Activated naive CD8-positive, alpha-beta T cell treated with anti-CD3 and anti-CD28 coated beads, Interleukin-2, amount 10 ng/mL, durations not matched to agents 7 days and 5 days (primary cell): ENCODE measurements at regions of chr1 and their contacts with region 1.

Region 1: DNA sequence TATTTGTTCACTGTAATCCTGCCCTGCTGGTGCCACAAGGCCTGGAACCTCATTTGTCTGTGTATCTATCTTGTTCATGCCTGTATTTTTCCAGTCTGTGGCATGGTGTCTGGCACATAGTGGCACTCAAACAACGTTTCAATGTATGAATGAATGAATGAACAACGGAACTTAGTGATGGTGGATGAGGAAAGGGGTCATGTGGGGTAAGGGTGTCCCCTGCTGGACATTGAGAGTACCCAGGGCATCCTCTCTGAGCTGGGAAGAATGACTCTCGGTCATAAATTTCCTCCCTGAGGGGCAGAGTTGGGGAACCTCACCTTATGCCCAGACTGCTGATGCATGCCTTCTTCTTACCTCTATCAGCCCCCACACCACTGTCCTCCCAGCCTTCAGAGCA is 18.9 kb upstream of the ZNF683 start:
- DNase-seq: no peak
- ATAC-seq: peak; percentile 66
- H3K4me3 Mint-ChIP-seq: peak overlapping the region; percentile 60
- H3K27ac Mint-ChIP-seq: peak overlapping the region; percentile 82
- H3K4me1 Mint-ChIP-seq: peaks cover 55% of the 10 kb centered on the region
- H3K27me3 Mint-ChIP-seq: peaks cover 4% of the 10 kb centered on the region

Region 2: GRCh38 chr1:26321315-26322041 is 70.0 kb before region 1 on chr1:
- POLR2A ChIA-PET with region 1: interaction called, 11 read pairs
- DNase-seq: peak; percentile 95
- ATAC-seq: peak; percentile 71
- H3K4me3 Mint-ChIP-seq: peak overlapping the region; percentile 94
- H3K27ac Mint-ChIP-seq: peak overlapping the region; percentile 99
- H3K4me1 Mint-ChIP-seq: peaks cover 36% of the 10 kb centered on the region
- H3K27me3 Mint-ChIP-seq: no peaks in the 10 kb centered on the region

Region 3: DNA sequence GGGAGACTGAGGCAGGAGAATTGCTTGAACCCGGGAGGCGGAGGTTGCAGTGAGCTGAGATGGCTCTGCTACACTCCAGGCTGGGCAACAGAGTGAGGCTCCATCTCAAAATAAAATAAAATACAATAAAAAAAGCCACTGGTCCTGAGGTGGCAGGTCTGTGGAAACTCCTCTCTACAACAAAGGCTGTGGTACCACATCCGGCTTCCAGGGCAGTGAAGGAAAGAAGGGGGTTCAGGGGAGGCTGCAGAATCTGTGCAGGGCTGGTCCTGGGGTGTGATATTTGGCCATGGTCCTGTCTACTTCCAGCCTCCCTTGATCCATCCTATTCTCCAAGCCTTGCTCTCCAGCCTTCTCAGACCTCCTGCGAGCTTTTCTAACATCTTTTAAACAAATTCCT is 18.2 kb before region 1 on chr1:
- POLR2A ChIA-PET with region 1: interaction called, 36 read pairs
- DNase-seq: no peak
- ATAC-seq: peak; percentile 57
- H3K4me3 Mint-ChIP-seq: peak overlapping the region; percentile 68
- H3K27ac Mint-ChIP-seq: peak overlapping the region; percentile 82
- H3K4me1 Mint-ChIP-seq: peaks cover 70% of the 10 kb centered on the region
- H3K27me3 Mint-ChIP-seq: no peaks in the 10 kb centered on the region

Region 4: DNA sequence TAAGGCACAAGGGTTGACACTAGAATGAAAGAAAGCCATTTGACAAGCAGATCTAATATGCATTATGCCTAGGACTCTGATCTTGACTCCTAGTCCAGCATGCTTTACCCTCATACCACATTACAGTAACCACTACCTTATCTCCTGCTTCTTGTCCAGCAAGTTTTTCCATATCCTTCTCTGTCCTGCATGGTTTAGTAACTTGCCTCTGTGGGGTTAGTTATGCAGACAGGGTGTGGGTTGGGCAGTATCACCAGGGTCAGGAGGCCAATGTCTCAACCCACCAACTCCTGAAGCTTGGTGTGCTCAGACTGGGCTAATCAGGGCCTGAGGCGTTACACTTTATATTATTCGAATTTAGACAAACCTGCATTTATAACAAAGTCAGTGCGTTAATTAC is 59.5 kb after region 1 on chr1:
- POLR2A ChIA-PET with region 1: no interaction called
- DNase-seq: no peak
- ATAC-seq: no peak
- H3K4me3 Mint-ChIP-seq: no peak overlapping the region
- H3K27ac Mint-ChIP-seq: no peak overlapping the region
- H3K4me1 Mint-ChIP-seq: no peaks in the 10 kb centered on the region
- H3K27me3 Mint-ChIP-seq: no peaks in the 10 kb centered on the region